ENCODE measurements at regions of chr11 and their contacts with region 1.

Region 1: DNA sequence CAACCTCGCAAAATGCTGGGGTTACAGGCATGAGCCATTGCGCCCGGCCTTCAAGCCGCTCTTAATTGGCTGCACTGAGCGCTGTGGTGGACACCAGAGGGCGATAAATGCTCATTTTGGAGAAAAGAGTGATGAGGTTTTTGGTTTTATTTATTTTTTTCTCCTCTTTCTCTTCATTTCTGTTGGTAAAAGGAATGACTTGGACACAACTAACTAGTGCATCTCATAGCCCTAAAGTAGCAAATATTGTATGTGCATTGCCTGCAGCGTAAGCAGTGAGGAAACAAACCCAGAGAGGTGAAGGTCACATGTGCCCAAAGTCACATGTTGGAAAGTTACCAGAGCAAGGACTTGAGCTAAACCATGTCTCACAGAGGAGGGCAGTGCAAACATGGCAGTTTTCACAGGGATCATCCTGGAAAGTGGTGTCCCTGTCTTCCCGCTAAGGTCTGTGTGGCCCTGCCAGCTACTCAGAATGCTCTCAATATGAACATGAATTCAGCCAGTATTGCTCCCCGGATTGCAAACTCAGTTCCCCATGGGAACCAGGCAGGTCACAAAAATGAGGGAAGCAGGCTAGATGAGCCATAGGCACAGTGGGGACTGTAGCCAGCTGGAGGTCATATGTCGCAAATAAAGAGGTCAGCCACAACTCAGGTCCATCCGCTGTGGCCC is 8.6 kb upstream of the CD82 start:
- DNase-seq: no peak
- H3K4me3 ChIP-seq: no peak overlapping the region
- H3K27ac ChIP-seq: no peak overlapping the region
- H3K4me1 ChIP-seq: peaks cover 0 to 40% (median 25%) of the 10 kb centered on the region in 3 donors
- H3K27me3 ChIP-seq: no peaks in the 10 kb centered on the region
- CTCF ChIP-seq: peak; percentile 43 to 91 (median 88)
- POLR2A ChIP-seq: no peak

Region 2: GRCh38 chr11:44680982-44681597 is 124.2 kb after region 1 on chr11:
- intact Hi-C with region 1: no loop called
- DNase-seq: no peak
- H3K4me3 ChIP-seq: no peak overlapping the region
- H3K27ac ChIP-seq: no peak overlapping the region
- H3K4me1 ChIP-seq: no peaks in the 10 kb centered on the region
- H3K27me3 ChIP-seq: peaks cover 0 to under 1% (median 0%) of the 10 kb centered on the region in 4 donors
- CTCF ChIP-seq: no peak
- POLR2A ChIP-seq: no peak

Region 3: GRCh38 chr11:44775366-44775984 is 218.6 kb after region 1 on chr11:
- intact Hi-C with region 1: loop called (anchors 10 kb)
- DNase-seq: no peak
- H3K4me3 ChIP-seq: no peak overlapping the region
- H3K27ac ChIP-seq: peak overlapping the region in 3 of 4 donors; percentile 20 to 73 (median 56)
- H3K4me1 ChIP-seq: peaks cover 6 to 35% (median 14%) of the 10 kb centered on the region in 3 donors
- H3K27me3 ChIP-seq: no peaks in the 10 kb centered on the region
- CTCF ChIP-seq: peak; percentile 38 to 76 (median 66)
- POLR2A ChIP-seq: no peak

Measured in esophagus squamous epithelium (tissue), 5 donors.